ENCODE measurements at regions of chr18 and their contacts with region 1.

Region 1: DNA sequence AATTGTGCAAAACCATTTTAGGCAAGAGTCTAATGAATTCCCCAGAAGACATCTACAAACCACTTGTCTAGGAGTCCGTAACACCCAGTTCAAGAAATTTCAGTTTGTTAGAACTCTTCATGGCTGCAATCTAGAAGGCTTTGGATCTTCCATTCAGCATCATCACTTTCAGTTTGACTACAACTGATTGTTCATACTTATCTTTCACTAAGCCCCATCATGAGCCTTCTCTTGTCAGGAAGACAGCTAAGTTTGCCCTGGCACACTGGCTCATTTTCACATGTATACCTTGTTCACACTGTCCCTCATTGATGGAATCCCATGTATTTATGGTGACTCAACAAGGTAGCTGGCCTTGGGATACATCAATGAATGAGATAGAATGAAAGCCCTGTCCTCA is 898.4 kb upstream of the CELF4 start:
- DNase-seq: no peak
- H3K4me3 ChIP-seq: no peak overlapping the region
- H3K27ac ChIP-seq: no peak overlapping the region
- H3K4me1 ChIP-seq: no peaks in the 10 kb centered on the region
- H3K27me3 ChIP-seq: no peaks in the 10 kb centered on the region
- CTCF ChIP-seq: no peak
- POLR2A ChIP-seq: no peak

Region 2: GRCh38 chr18:38402509-38402908 is 61.5 kb before region 1 on chr18:
- intact Hi-C with region 1: loop called in 1 of 2 experiments (anchors 10 kb)
- DNase-seq: no peak
- H3K4me3 ChIP-seq: no peak overlapping the region
- H3K27ac ChIP-seq: no peak overlapping the region
- H3K4me1 ChIP-seq: no peaks in the 10 kb centered on the region
- H3K27me3 ChIP-seq: no peaks in the 10 kb centered on the region
- CTCF ChIP-seq: no peak
- POLR2A ChIP-seq: no peak

Measured in adrenal gland (tissue), 19 donors.